ENCODE measurements at regions of chr11 and their contacts with region 1.

Region 1: GRCh38 chr11:62427630-62428233 is 8.9 kb downstream of the SCGB1A1 start:
- DNase-seq: peak; percentile 77 to 90 (median 89)
- H3K4me3 ChIP-seq: peak overlapping the region in 1 of 3 experiments; percentile 18
- H3K4me3 Mint-ChIP-seq: peak overlapping the region in 1 of 2 donors; percentile 54
- H3K27ac ChIP-seq: peak overlapping the region; percentile 90 to 96
- H3K27ac Mint-ChIP-seq: peak overlapping the region; percentile 91 to 98 (median 96)
- H3K4me1 ChIP-seq: peaks cover 82 to 86% of the 10 kb centered on the region in 2 donors
- H3K4me1 Mint-ChIP-seq: peaks cover 85% of the 10 kb centered on the region
- H3K27me3 ChIP-seq: no peaks in the 10 kb centered on the region
- H3K27me3 Mint-ChIP-seq: peaks cover 0 to 2% (median 0%) of the 10 kb centered on the region in 3 donors
- CTCF ChIP-seq: no peak

Region 2: DNA sequence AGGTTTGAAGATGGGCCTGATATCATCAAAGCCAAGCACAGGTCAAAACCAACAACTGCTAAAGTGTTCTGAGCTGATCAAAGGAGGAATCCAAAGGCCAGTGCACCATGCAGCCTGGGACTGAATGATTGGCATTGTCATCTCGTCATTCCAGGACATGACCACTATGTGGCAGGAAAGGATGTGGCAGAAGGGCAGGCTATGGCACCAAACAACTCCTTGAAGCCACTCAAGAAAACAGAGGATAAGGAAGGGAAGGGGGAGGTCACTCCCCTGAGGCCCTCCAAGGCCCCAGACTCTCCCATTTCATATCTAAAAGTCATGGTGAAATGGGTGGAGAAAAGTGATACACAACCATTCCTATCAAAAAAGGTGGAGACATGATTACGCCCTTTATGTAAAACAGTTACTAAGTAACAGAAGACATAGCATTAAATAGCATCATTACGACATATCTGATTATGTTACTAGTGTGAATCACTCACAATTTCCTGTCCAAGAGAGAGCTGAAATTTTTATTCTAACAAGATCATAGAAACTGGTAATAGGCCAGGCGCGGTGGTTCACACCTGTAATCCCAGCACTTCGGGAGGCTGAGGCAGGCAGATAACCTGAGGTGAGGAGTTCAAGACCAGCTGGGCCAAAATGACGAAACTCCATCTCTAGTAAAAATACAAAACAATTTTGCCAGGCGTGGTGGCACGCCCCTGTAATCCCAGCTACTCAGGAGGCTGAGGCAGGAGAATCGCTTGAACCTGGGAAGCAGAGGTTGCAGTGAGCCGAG is 69.6 kb after region 1 on chr11:
- intact Hi-C with region 1: loop called (anchors 2 to 5 kb)
- DNase-seq: peak; percentile 63 to 93 (median 79)
- H3K4me3 ChIP-seq: peak overlapping the region in 1 of 3 experiments; percentile 29
- H3K4me3 Mint-ChIP-seq: peak overlapping the region; percentile 29 to 43
- H3K27ac ChIP-seq: peak overlapping the region; percentile 80 to 87
- H3K27ac Mint-ChIP-seq: peak overlapping the region; percentile 93 to 98 (median 98)
- H3K4me1 ChIP-seq: peaks cover 66 to 68% of the 10 kb centered on the region in 2 donors
- H3K4me1 Mint-ChIP-seq: peaks cover 61% of the 10 kb centered on the region
- H3K27me3 ChIP-seq: no peaks in the 10 kb centered on the region
- H3K27me3 Mint-ChIP-seq: peaks cover 0 to 3% (median 0%) of the 10 kb centered on the region in 3 donors
- CTCF ChIP-seq: peak; percentile 70

Region 3: GRCh38 chr11:62573592-62574362 is 146.0 kb after region 1 on chr11 and contains the start of gene EEF1G:
- intact Hi-C with region 1: no loop called
- DNase-seq: peak; percentile 99
- H3K4me3 ChIP-seq: peak within 1 kb of the TSS; percentile 68 to 100 (median 91)
- H3K4me3 Mint-ChIP-seq: peak within 1 kb of the TSS; percentile 95 to 99
- H3K27ac ChIP-seq: peak within 1 kb of the TSS; percentile 77 to 85
- H3K27ac Mint-ChIP-seq: peak within 1 kb of the TSS; percentile 90 to 96 (median 94)
- H3K4me1 ChIP-seq: peaks cover 22 to 29% of the 10 kb centered on the region in 2 donors
- H3K4me1 Mint-ChIP-seq: peaks cover 44% of the 10 kb centered on the region
- H3K27me3 ChIP-seq: no peaks in the 10 kb centered on the region
- H3K27me3 Mint-ChIP-seq: peaks cover 0 to 2% (median 0%) of the 10 kb centered on the region in 3 donors
- CTCF ChIP-seq: no peak
- polyA plus RNA-seq, gene EEF1G: 490 to 603 (median 491) TPM